GM12878 (cell line): ENCODE measurements at regions of chr3 and their contacts with region 1.

Region 1: GRCh38 chr3:56988458-56989168 is 71.9 kb upstream of the SPATA12 start:
- DNase-seq: no peak
- ATAC-seq: peak; percentile 86
- H3K4me3 ChIP-seq: no peak overlapping the region
- H3K27ac ChIP-seq: no peak overlapping the region
- H3K4me1 ChIP-seq: no peaks in the 10 kb centered on the region
- H3K27me3 ChIP-seq: peaks cover 0 to 6% of the 10 kb centered on the region in 2 experiments; a peak in 3 of 4 replicates
- CTCF ChIP-seq: peak; percentile 66 to 83 (median 70)
- EP300 ChIP-seq: no peak
- POLR2A ChIP-seq: no peak
- RAD21 ChIP-seq: peak; percentile 97

Region 2: GRCh38 chr3:56812754-56813650 is 175.6 kb before region 1 on chr3:
- CTCF ChIA-PET with region 1: interaction called, 18 read pairs
- POLR2A ChIA-PET with region 1: no interaction called
- RAD21 ChIA-PET with region 1: interaction called, 206 read pairs
- SMC1A ChIA-PET with region 1: interaction called, 21 read pairs
- in situ Hi-C with region 1: no loop called
- intact Hi-C with region 1: no loop called
- DNase-seq: no peak
- ATAC-seq: no peak
- H3K4me3 ChIP-seq: no peak overlapping the region
- H3K27ac ChIP-seq: no peak overlapping the region
- H3K4me1 ChIP-seq: no peaks in the 10 kb centered on the region
- H3K27me3 ChIP-seq: 0 out of 4 replicates have a peak, but pooled peaks cover 0 to 2% of the 10 kb centered on the region in 2 experiments
- CTCF ChIP-seq: no peak
- EP300 ChIP-seq: no peak
- POLR2A ChIP-seq: no peak
- RAD21 ChIP-seq: no peak

Region 3: DNA sequence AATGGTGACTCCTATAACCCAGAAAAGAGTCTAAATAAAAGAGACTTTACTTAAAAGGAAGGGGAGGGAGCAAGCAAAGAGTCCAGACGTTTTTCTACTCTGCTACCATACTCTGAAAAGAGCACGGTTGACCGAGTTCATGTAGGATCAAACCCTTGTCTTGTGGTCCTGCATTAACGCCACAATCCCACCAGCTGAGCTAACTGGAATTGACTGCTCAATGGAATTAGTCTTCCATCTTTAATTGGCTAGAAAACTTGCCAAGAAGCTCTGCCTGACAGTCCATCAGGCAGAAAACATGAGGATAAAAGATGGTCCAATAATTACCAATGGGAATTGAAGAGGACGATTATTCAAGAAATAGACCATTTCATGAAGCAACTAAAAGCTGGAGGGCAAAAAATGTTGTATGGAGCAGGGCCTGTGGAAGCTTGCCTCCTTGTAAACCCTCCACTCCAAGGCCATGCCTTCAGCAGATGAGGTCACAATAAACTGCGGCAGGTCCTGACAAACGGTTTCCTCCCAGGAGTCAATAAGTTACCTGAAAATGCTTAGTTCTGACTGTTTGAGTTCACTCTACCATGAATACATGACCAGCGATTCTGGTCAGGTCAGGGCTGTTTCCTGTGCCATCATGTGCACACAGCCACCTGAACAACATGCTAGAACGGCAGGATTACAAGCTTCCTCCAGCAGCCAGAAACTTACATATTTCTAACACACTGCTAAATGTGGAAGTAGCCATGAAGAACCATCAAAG is 151.2 kb before region 1 on chr3:
- CTCF ChIA-PET with region 1: interaction called, 13 read pairs
- POLR2A ChIA-PET with region 1: no interaction called
- RAD21 ChIA-PET with region 1: interaction called, 4 read pairs
- SMC1A ChIA-PET with region 1: interaction called, 6 read pairs
- in situ Hi-C with region 1: no loop called
- intact Hi-C with region 1: no loop called
- DNase-seq: peak; percentile 21
- ATAC-seq: peak; percentile 98
- H3K4me3 ChIP-seq: no peak overlapping the region
- H3K27ac ChIP-seq: no peak overlapping the region
- H3K4me1 ChIP-seq: peaks cover 7% of the 10 kb centered on the region
- H3K27me3 ChIP-seq: no peaks in the 10 kb centered on the region
- CTCF ChIP-seq: no peak
- EP300 ChIP-seq: 0 out of 4 replicates have a peak, but pooled peaks of 1 of the 2 experiments have one; percentile 16
- POLR2A ChIP-seq: no peak
- RAD21 ChIP-seq: no peak

Region 4: DNA sequence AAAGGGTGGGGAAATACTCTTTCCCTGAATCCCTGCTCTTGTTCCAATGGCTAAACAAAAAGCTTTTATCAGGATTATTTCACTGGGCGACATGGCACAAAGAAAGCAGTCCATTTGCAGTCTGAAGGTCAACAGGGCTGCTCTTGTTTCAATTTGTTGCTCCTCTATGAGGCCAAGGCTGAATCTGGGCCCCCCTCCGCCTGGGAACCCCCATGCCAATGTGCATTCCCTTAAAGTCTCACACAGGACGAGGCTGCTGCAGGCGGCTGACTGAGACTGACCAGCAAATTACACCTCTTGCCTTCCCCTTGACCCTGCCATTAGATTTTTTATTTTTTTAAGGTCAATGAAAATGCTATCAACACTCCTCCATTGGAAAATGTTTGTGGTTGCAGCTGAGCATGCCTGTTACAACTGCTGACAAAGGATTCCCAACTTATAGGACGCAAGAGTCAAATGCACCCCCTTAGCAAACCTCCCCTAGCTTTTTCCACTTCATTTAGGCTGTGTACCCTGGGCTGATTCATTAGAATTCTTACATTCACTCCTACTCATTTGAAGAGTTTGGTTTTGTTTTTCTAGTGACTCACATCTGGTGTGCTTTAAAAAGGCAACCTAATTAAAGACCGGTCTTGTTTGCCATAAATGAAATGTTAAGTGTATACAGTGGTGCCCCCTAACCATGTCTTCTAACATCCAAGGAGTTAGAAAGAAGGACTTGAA is 126.1 kb before region 1 on chr3:
- CTCF ChIA-PET with region 1: interaction called, 136 read pairs
- POLR2A ChIA-PET with region 1: no interaction called
- RAD21 ChIA-PET with region 1: interaction called, 47 read pairs
- SMC1A ChIA-PET with region 1: interaction called, 54 read pairs
- in situ Hi-C with region 1: no loop called
- intact Hi-C with region 1: no loop called
- DNase-seq: no peak
- ATAC-seq: peak; percentile 73
- H3K4me3 ChIP-seq: no peak overlapping the region
- H3K27ac ChIP-seq: no peak overlapping the region; the same call in 1 of the 2 replicates
- H3K4me1 ChIP-seq: peaks cover 23% of the 10 kb centered on the region
- H3K27me3 ChIP-seq: no peaks in the 10 kb centered on the region
- CTCF ChIP-seq: no peak
- EP300 ChIP-seq: no peak; a peak in 1 of 4 replicates
- POLR2A ChIP-seq: no peak
- RAD21 ChIP-seq: 0 out of 2 replicates have a peak, but pooled peaks have one; percentile 9

Region 5: GRCh38 chr3:56960234-56960917 is 28.2 kb before region 1 on chr3:
- CTCF ChIA-PET with region 1: interaction called, 11 read pairs
- POLR2A ChIA-PET with region 1: no interaction called
- RAD21 ChIA-PET with region 1: interaction called, 8 read pairs
- SMC1A ChIA-PET with region 1: interaction called, 4 read pairs
- in situ Hi-C with region 1: no loop called
- intact Hi-C with region 1: no loop called
- DNase-seq: peak; percentile 39
- ATAC-seq: peak; percentile 88
- H3K4me3 ChIP-seq: no peak overlapping the region
- H3K27ac ChIP-seq: no peak overlapping the region
- H3K4me1 ChIP-seq: peaks cover 23% of the 10 kb centered on the region
- H3K27me3 ChIP-seq: no peaks in the 10 kb centered on the region
- CTCF ChIP-seq: no peak
- EP300 ChIP-seq: peak in 1 of 2 experiments; percentile 50; a peak in 1 of 4 replicates
- POLR2A ChIP-seq: no peak
- RAD21 ChIP-seq: no peak

Region 6: DNA sequence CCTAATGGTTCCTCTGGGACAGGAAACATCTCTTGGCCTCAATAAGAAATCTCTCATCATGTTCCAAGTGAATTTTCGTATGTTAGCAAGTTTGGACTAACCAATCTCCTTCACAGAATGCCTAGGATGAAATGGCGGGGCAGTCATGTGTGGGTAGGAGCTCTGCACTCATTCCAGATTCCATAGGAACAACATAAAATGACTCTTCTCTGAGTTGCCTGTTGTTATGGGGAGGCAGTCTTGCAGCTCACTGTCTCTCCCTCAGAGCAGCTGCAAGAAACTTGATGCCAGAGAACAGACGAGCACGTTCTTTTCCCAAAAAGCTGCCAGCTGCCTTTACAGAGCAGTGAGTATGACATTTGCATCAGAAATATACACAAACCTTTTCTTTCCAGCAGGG is 106.0 kb after region 1 on chr3:
- CTCF ChIA-PET with region 1: interaction called, 10 read pairs
- POLR2A ChIA-PET with region 1: no interaction called
- RAD21 ChIA-PET with region 1: interaction called, 3 read pairs
- SMC1A ChIA-PET with region 1: interaction called, 6 read pairs
- in situ Hi-C with region 1: no loop called
- intact Hi-C with region 1: no loop called
- DNase-seq: no peak
- ATAC-seq: no peak
- H3K4me3 ChIP-seq: no peak overlapping the region
- H3K27ac ChIP-seq: no peak overlapping the region
- H3K4me1 ChIP-seq: no peaks in the 10 kb centered on the region
- H3K27me3 ChIP-seq: no peaks in the 10 kb centered on the region; a peak in 1 of 4 replicates
- CTCF ChIP-seq: no peak
- EP300 ChIP-seq: no peak
- POLR2A ChIP-seq: no peak
- RAD21 ChIP-seq: no peak

Region 7: GRCh38 chr3:57446318-57446841 is 457.8 kb after region 1 on chr3:
- CTCF ChIA-PET with region 1: no interaction called
- POLR2A ChIA-PET with region 1: no interaction called
- RAD21 ChIA-PET with region 1: no interaction called
- SMC1A ChIA-PET with region 1: no interaction called
- in situ Hi-C with region 1: no loop called
- intact Hi-C with region 1: no loop called
- DNase-seq: no peak
- ATAC-seq: no peak
- H3K4me3 ChIP-seq: no peak overlapping the region
- H3K27ac ChIP-seq: no peak overlapping the region
- H3K4me1 ChIP-seq: no peaks in the 10 kb centered on the region
- H3K27me3 ChIP-seq: no peaks in the 10 kb centered on the region
- CTCF ChIP-seq: no peak
- EP300 ChIP-seq: no peak
- POLR2A ChIP-seq: no peak
- RAD21 ChIP-seq: no peak